ENCODE measurements at regions of chr12 and their contacts with region 1.

Region 1: DNA sequence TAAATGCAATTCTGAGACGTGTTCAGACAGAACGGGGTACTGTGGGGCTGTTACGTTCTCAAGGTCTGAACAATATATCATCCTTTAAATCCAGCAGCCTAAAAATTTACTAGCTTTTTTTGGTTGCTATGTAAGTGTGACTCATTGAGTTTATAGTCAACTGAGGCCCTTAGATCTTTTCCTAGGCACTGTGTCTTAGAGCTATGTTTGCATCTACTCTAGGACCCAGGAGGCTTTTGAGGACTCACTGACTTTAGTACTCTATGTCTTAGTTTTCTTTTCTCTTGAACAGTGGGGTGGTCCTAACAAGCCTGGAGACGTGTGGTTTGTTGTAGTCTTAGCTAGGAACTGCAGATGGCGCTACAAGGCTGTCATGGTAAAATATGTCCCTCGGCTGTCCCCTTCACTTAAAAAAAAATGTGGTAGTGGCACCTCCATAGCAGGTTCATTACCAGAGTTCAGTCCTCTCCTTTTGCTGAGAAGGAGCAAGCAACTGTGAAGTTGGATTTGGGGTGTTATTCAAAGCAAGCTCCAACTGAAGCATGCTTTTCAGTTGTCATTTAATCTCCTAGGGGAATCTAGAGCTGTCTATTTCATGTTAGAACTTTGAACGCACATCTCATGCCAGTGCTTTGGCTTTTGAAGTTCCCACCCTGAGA is 8.7 kb upstream of the SPATS2 start:
- DNase-seq: peak; percentile 70
- CTCF ChIP-seq: peak; percentile 69

Region 2: GRCh38 chr12:49288412-49288853 is 70.2 kb before region 1 on chr12:
- CTCF ChIA-PET with region 1: interaction called, 239 read pairs
- POLR2A ChIA-PET with region 1: no interaction called
- DNase-seq: peak; percentile 81
- CTCF ChIP-seq: peak; percentile 82

Region 3: GRCh38 chr12:49347384-49348237 is 11.0 kb before region 1 on chr12:
- CTCF ChIA-PET with region 1: interaction called, 129 read pairs
- POLR2A ChIA-PET with region 1: no interaction called
- DNase-seq: peak; percentile 90
- CTCF ChIP-seq: peak; percentile 95

Region 4: GRCh38 chr12:49456131-49456679 is 97.6 kb after region 1 on chr12:
- CTCF ChIA-PET with region 1: interaction called, 10 read pairs
- POLR2A ChIA-PET with region 1: no interaction called
- DNase-seq: no peak
- CTCF ChIP-seq: no peak

Region 5: GRCh38 chr12:49527361-49528130 is 168.9 kb after region 1 on chr12:
- CTCF ChIA-PET with region 1: interaction called, 16 read pairs
- POLR2A ChIA-PET with region 1: no interaction called
- DNase-seq: no peak
- CTCF ChIP-seq: no peak

Region 6: DNA sequence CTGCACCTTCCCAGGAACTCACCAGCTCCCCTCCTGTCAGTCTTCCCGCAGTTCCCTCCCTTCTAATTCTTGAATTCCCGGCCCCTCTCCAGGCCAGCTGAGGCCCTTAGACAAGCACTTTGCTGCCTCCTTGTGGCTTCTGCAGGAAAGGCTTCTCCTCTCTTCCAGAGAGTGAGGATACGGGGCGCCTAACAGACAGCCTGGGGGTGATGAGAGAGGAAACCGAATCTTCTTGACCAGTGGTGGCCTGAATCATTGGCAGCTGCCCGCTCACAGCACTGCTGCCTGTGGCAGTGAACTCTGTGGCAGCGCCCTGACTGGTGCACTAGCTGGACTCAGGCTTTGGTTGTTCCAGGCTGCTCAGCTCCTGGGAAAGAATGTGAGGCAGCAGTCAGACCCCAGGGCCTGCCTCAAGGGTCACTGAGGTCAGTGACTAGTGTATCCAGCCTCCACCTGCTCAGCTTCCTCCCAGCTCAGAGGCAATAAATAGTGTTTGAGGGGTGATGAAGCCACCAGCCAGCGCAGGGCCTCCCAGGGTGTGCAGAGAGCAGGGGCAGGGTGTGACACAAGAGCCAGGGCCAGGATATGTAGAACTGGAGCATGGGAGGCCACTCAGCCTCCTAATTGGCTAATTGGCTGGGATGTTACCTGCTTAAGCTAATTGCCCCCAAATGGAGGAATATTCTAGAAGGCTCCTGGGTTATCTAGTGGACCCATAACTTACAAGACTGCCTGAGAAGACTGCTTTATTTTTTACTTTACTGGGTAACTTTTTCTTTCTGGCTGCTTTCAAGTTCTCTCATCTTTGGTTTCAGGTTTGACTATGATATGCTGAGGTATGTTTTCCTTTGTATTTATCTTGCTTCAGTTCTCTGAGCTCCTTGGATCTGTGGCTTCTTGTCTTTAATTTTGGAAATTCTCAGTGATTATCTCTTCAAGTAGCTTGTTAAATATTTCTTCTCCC is 222.2 kb after region 1 on chr12:
- CTCF ChIA-PET with region 1: interaction called, 113 read pairs
- POLR2A ChIA-PET with region 1: no interaction called
- DNase-seq: peak; percentile 79
- CTCF ChIP-seq: peak; percentile 91